Head of caudate nucleus (tissue), 42 donors: ENCODE measurements at regions of chr3 and their contacts with region 1.

Region 1: GRCh38 chr3:115692887-115693524 is 69.7 kb downstream of the GAP43 start:
- DNase-seq: peak; percentile 38 to 92 (median 80)

Region 2: GRCh38 chr3:115217678-115218451 is 475.1 kb before region 1 on chr3:
- intact Hi-C with region 1: loop called (anchors 5 kb)
- DNase-seq: peak in 26 of 42 donors; percentile 9 to 69 (median 34)

Region 3: GRCh38 chr3:115233021-115233420 is 460.0 kb before region 1 on chr3:
- intact Hi-C with region 1: no loop called
- DNase-seq: no peak

Region 4: GRCh38 chr3:115595611-115596275 is 97.3 kb before region 1 on chr3:
- intact Hi-C with region 1: no loop called
- DNase-seq: no peak

Region 5: GRCh38 chr3:115783938-115784738 is 91.1 kb after region 1 on chr3:
- intact Hi-C with region 1: loop called (anchors 5 kb)
- DNase-seq: peak; percentile 67 to 94 (median 86)